Activated CD8-positive, alpha-beta memory T cell treated with anti-CD3 and anti-CD28 coated beads, Interleukin-2, amount 10 ng/mL, durations not matched to agents 7 days and 5 days (primary cell): ENCODE measurements at regions of chr2 and their contacts with region 1.

Region 1: GRCh38 chr2:95121407-95122196 is at the start of gene MRPS5:
- DNase-seq: peak; percentile 88
- ATAC-seq: peak; percentile 97
- H3K4me3 Mint-ChIP-seq: peak within 1 kb of the TSS; percentile 97
- H3K27ac Mint-ChIP-seq: peak within 1 kb of the TSS; percentile 89
- H3K4me1 Mint-ChIP-seq: peaks cover 38% of the 10 kb centered on the region
- H3K27me3 Mint-ChIP-seq: no peaks in the 10 kb centered on the region
- total RNA-seq, gene MRPS5: 80.0 to 82.7 TPM

Region 2: DNA sequence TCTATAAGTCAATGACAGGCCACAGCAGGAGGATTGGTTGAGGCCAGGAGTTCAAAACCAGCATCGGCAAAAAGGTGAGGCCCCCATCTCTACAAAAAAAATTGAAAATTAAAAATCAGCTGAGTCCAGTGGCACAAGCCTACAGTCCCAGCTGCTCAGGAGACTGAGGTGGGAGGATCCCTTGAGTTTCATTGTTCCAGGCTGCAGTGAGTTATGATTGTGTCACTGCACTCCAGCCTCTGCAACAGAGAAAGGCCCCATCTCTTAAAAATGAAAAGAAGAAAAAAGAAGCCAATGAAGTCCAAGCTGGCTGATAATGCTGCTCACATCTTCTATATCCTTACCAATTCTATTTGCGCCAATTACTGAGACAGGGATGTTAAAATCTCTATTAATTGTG is 39.1 kb before region 1 on chr2:
- CTCF ChIA-PET with region 1: interaction called, 53 read pairs
- DNase-seq: no peak
- ATAC-seq: no peak
- H3K4me3 Mint-ChIP-seq: no peak overlapping the region
- H3K27ac Mint-ChIP-seq: no peak overlapping the region
- H3K4me1 Mint-ChIP-seq: peaks cover 24% of the 10 kb centered on the region
- H3K27me3 Mint-ChIP-seq: no peaks in the 10 kb centered on the region

Region 3: DNA sequence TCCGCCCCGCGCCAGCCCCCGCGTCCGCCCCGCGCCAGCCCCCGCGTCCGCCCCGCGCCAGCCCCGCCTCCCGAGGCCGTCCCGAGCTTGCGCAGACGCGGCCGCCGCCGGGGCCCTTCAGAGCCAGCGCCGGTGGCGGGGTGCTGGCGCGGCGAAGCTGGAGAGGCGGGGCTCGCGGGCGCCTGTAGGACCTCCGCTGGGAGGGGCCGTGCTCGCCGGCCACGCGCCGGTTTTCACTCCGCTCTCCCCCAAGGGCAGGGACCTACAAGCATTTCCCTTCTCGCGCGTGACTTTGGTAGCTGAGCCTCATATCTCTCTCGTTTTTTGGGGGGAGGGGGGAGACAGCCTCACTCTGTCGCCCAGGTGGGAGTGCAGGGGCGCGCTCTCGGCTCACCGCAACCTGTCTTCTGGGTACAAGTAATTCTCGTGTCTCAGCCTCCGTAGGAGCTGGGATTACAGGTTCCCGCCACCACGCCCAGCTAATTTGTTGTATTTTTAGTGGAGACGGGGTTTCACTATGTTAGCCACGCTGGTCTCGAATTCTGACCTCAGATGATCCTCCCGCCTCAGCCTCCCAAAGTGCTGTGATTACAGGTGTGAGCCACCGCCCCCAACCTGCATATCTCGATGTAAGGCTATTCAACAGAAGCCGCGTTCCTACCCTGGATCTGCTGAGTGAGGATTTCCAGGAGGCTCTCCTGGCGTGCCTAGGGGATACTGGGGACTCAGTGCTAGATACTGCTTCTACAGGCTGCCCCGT is 38.3 kb after region 1 on chr2 and contains the start of gene ZNF514:
- CTCF ChIA-PET with region 1: interaction called, 16 read pairs
- DNase-seq: peak; percentile 78
- ATAC-seq: peak; percentile 96
- H3K4me3 Mint-ChIP-seq: peak within 1 kb of the TSS; percentile 77
- H3K27ac Mint-ChIP-seq: peak within 1 kb of the TSS; percentile 69
- H3K4me1 Mint-ChIP-seq: peaks cover 18% of the 10 kb centered on the region
- H3K27me3 Mint-ChIP-seq: no peaks in the 10 kb centered on the region
- total RNA-seq, gene ZNF514: 12.0 to 14.2 TPM

Region 4: DNA sequence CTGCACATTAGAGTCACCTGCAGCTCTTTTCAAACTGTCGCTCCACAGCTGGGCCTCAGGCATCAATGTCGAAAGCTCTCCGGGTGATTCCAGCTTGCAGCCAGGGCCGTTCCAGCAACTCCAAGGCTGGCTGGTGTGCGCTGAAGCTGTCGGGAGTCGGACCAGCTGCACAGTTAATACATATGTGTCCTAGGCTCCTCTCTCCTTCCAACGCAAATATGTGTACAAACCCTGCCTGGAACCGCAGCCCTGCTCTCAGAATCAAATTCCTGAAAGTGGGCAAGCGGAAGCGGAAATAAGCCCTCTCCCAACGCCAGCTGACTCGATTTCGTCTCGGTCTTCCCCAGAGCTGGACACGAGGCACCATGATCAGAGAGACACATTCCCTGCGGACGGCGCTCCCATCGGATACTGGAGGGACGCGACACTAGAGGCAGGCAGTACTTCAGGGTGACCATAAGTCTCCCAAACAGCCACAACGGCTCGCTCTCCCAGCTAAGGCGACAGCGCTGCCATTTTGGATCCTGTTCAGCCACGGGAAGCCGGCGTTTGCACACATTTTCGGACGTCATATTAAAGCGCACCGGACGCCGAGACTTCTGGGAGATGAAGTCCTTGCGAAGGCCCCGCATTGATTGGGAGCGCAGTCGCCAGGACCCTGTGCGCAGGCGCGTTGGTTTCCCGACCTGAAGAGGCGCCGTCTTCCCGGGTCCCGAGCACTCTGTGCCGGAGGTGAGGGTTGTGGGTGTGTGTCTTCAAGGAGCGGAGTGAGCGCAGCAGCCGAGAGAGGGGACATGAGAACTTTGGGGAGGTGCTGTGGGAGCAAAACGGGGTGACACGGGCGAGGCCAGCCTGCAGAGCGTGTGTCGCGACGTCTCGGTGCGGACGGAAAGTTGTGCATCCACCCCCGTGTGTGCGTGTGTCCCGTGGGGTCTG is 43.8 kb after region 1 on chr2 and contains the start of gene ZNF2:
- CTCF ChIA-PET with region 1: interaction called, 16 read pairs
- DNase-seq: peak; percentile 98
- ATAC-seq: peak; percentile 97
- H3K4me3 Mint-ChIP-seq: peak within 1 kb of the TSS; percentile 98
- H3K27ac Mint-ChIP-seq: peak within 1 kb of the TSS; percentile 96
- H3K4me1 Mint-ChIP-seq: peaks cover 28% of the 10 kb centered on the region
- H3K27me3 Mint-ChIP-seq: no peaks in the 10 kb centered on the region
- total RNA-seq, gene ZNF2: 5.0 to 5.2 TPM